Right cardiac atrium (tissue), 5 donors: ENCODE measurements at regions of chr22 and their contacts with region 1.

Region 1: DNA sequence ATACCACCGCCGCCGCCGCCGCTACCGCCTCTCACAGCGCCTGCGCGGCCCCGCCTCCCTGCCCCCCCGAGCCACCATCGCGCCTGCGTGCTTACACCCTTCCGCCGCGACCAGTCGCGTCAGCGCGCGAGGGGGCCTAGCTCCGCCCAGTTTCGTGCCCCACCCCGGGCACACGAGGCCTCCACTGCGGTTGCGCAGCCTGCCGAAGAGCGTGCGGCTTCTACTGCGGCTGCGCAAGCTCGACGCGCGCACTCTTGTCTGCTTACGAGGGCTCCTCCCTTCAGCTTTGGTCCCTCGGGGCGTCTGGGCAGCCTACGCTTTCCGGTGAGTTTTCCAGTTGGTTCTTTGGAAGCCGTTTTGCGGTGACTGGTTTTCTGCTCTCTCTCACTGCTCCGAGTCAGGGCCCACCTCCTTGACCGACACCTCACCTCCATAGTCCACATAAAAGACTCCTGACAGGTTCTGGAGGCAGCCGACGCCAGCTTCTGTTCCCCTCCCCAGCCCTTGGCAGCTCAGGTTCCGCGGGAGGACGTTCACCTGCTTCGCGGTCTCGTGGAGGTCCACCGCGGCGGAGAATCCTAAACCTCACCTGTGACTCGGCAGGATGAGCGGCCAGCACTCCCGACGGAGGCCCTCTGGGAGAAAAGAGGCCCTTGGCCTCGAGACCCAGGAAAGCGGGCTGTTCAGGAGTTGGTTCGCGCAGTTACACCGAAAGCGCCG is at the start of gene PITPNB:
- DNase-seq: peak; percentile 99 to 100 (median 99)
- ATAC-seq: peak; percentile 96 to 97
- H3K4me3 ChIP-seq: peak within 1 kb of the TSS; percentile 80
- H3K27ac ChIP-seq: peak within 1 kb of the TSS; percentile 96
- H3K4me1 ChIP-seq: peaks cover 5% of the 10 kb centered on the region
- H3K27me3 ChIP-seq: no peaks in the 10 kb centered on the region
- total RNA-seq, gene PITPNB: 77.3 to 92.7 (median 84.1) TPM

Region 2: GRCh38 chr22:27842669-27843431 is 76.5 kb before region 1 on chr22:
- intact Hi-C with region 1: no loop called
- DNase-seq: no peak
- ATAC-seq: peak; percentile 17 to 33
- H3K4me3 ChIP-seq: no peak overlapping the region
- H3K27ac ChIP-seq: no peak overlapping the region
- H3K4me1 ChIP-seq: peaks cover 7% of the 10 kb centered on the region
- H3K27me3 ChIP-seq: no peaks in the 10 kb centered on the region

Region 3: GRCh38 chr22:27880778-27881394 is 38.5 kb before region 1 on chr22:
- intact Hi-C with region 1: loop called in 1 of 4 experiments (anchors 5 kb)
- DNase-seq: no peak
- ATAC-seq: peak; percentile 80 to 84
- H3K4me3 ChIP-seq: no peak overlapping the region
- H3K27ac ChIP-seq: peak overlapping the region; percentile 81
- H3K4me1 ChIP-seq: peaks cover 6% of the 10 kb centered on the region
- H3K27me3 ChIP-seq: no peaks in the 10 kb centered on the region

Region 4: GRCh38 chr22:28034760-28035401 is 115.5 kb after region 1 on chr22:
- intact Hi-C with region 1: no loop called
- DNase-seq: peak; percentile 86 to 92 (median 88)
- ATAC-seq: peak; percentile 88 to 90
- H3K4me3 ChIP-seq: no peak overlapping the region
- H3K27ac ChIP-seq: peak overlapping the region; percentile 84
- H3K4me1 ChIP-seq: peaks cover 17% of the 10 kb centered on the region
- H3K27me3 ChIP-seq: no peaks in the 10 kb centered on the region